AG04449 (cell line): ENCODE measurements at regions of chr7 and their contacts with region 1.

Region 1: GRCh38 chr7:45917658-45918057 is 3.4 kb downstream of the IGFBP3 start:
- DNase-seq: no peak
- H3K4me3 ChIP-seq: peak overlapping the region; percentile 78
- CTCF ChIP-seq: peak; percentile 91

Region 2: GRCh38 chr7:45162943-45163691 is 754.5 kb before region 1 on chr7:
- CTCF ChIA-PET with region 1: no interaction called
- POLR2A ChIA-PET with region 1: no interaction called
- DNase-seq: no peak
- H3K4me3 ChIP-seq: no peak overlapping the region
- CTCF ChIP-seq: no peak

Region 3: GRCh38 chr7:45897042-45897690 is 20.5 kb before region 1 on chr7:
- CTCF ChIA-PET with region 1: interaction called, 58 read pairs
- POLR2A ChIA-PET with region 1: no interaction called
- DNase-seq: no peak
- H3K4me3 ChIP-seq: no peak overlapping the region
- CTCF ChIP-seq: no peak

Region 4: GRCh38 chr7:46352004-46352954 is 434.6 kb after region 1 on chr7:
- CTCF ChIA-PET with region 1: interaction called, 320 read pairs
- POLR2A ChIA-PET with region 1: no interaction called
- DNase-seq: no peak
- H3K4me3 ChIP-seq: no peak overlapping the region
- CTCF ChIP-seq: peak; percentile 67

Region 5: GRCh38 chr7:47088329-47089067 is 1170.8 kb after region 1 on chr7:
- CTCF ChIA-PET with region 1: interaction called, 110 read pairs
- POLR2A ChIA-PET with region 1: interaction called, 4 read pairs
- DNase-seq: no peak
- H3K4me3 ChIP-seq: no peak overlapping the region
- CTCF ChIP-seq: peak; percentile 66